H1 (cell line): ENCODE measurements at regions of chr7 and their contacts with region 1.

Region 1: DNA sequence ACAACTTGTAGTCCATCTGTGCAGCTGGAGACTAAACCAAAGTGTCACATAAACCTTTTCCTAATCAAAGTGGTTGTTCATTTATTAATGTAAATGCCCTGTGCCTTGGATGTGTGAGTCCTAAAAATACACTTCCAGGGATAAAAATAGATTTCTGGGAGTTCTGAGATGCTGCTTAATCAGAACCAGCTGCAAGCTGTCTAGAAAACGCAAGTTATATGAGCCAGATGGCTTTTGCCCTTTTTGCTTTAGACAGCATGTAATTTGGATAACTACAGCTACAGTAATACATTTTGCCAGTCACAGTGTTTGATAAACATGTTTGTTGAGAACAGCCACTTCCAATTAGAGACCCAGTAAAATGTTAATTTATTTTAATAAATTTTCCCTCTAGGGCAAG is 185.1 kb upstream of the PRPS1L1 start:
- DNase-seq: no peak
- H3K4me3 ChIP-seq: no peak overlapping the region
- H3K27ac ChIP-seq: no peak overlapping the region
- H3K4me1 ChIP-seq: no peaks in the 10 kb centered on the region
- H3K27me3 ChIP-seq: no peaks in the 10 kb centered on the region
- CTCF ChIP-seq: no peak
- EP300 ChIP-seq: no peak
- POLR2A ChIP-seq: no peak
- RAD21 ChIP-seq: no peak

Region 2: DNA sequence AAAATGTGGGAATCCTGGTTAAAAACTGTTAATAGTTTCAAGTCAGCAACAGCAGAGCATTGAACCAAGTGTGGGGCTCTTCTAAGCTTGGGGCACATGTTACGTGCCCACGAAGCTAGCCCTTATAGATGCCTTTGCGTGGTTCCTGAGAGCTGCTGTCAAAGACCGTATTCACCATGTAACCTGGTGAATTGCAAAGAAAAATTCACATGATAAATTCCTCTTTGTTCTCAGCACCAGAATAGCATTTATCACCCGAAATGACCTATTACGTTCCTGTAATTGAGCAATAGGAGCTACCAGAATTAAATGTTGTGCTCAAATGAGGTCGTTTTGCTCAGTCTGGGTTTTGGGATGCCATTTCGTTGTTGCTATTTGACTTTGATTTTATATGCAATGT is 17.5 kb after region 1 on chr7:
- CTCF ChIA-PET with region 1: interaction called, 11 read pairs
- POLR2A ChIA-PET with region 1: no interaction called
- DNase-seq: no peak
- H3K4me3 ChIP-seq: no peak overlapping the region
- H3K27ac ChIP-seq: no peak overlapping the region
- H3K4me1 ChIP-seq: no peaks in the 10 kb centered on the region
- H3K27me3 ChIP-seq: no peaks in the 10 kb centered on the region
- CTCF ChIP-seq: no peak
- EP300 ChIP-seq: no peak
- POLR2A ChIP-seq: no peak
- RAD21 ChIP-seq: no peak

Region 3: DNA sequence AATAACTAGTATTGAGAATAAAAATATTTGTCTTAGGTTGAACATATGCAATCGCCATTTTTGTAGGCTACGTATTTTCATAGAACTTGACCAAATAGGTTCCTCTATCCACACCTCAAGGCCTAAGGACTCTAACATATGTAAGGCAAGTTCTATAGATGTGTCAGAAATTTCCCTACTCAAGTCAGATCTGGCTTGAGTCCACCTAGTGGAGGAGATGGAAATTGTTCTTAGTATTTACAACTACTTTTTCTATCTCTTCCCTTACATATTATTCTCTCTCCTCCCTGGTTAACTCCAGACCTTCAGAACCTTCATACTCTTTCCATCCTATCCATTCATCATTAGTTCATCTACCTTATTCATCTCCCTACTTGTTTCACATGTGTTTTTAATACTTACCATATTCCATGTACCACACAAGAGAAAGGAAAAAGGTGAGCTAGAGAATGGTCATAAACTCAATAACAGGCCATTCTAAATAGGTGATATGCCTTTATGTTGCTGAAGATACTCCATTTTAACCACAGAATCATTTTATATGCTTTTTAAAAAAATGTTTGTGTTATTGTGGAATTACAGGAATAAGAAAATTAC is 108.3 kb after region 1 on chr7:
- CTCF ChIA-PET with region 1: interaction called, 40 read pairs
- POLR2A ChIA-PET with region 1: no interaction called
- DNase-seq: no peak
- H3K4me3 ChIP-seq: no peak overlapping the region
- H3K27ac ChIP-seq: no peak overlapping the region
- H3K4me1 ChIP-seq: peaks cover 2 to 8% (median 4%) of the 10 kb centered on the region in 4 experiments; a peak in 4 of 7 replicates
- H3K27me3 ChIP-seq: no peaks in the 10 kb centered on the region
- CTCF ChIP-seq: peak in 1 of 3 experiments; percentile 48; a peak in 2 of 4 replicates
- EP300 ChIP-seq: no peak
- POLR2A ChIP-seq: no peak
- RAD21 ChIP-seq: peak; percentile 56 to 61

Region 4: GRCh38 chr7:18337048-18337809 is 124.5 kb after region 1 on chr7:
- CTCF ChIA-PET with region 1: interaction called, 12 read pairs
- POLR2A ChIA-PET with region 1: no interaction called
- DNase-seq: no peak
- H3K4me3 ChIP-seq: no peak overlapping the region
- H3K27ac ChIP-seq: no peak overlapping the region
- H3K4me1 ChIP-seq: no peaks in the 10 kb centered on the region
- H3K27me3 ChIP-seq: no peaks in the 10 kb centered on the region
- CTCF ChIP-seq: no peak
- EP300 ChIP-seq: no peak
- POLR2A ChIP-seq: no peak
- RAD21 ChIP-seq: no peak

Region 5: DNA sequence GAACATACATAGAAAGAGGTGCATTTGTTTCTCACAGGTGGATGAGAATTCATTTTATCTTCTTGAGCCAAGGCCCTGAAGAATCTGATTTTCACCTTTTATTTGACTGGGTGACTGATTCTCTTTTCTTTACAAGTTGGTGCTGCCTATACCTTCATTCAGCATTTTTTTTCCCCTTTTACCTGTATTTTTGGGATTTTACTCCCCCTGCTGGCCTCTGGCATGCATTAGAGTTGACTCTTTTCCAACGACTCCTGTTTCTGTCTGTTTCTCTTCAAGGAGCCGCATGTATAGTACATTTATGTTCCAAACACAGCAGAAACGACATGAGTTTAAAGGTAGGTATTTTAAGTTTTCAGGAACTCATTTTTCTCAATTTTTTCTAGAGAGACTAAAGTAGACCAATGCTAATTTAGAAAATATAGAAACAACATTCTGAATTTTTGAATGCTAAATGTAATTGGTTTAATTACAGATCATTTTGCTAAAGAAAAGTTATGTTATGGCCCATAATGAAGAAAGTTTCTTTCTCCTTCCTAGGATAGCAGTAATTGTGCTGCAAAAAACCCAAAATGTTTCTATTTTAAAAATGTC is 133.0 kb after region 1 on chr7:
- CTCF ChIA-PET with region 1: interaction called, 10 read pairs
- POLR2A ChIA-PET with region 1: no interaction called
- DNase-seq: peak in 1 of 2 experiments; percentile 57
- H3K4me3 ChIP-seq: no peak overlapping the region
- H3K27ac ChIP-seq: no peak overlapping the region
- H3K4me1 ChIP-seq: no peaks in the 10 kb centered on the region
- H3K27me3 ChIP-seq: no peaks in the 10 kb centered on the region
- CTCF ChIP-seq: peak in 2 of 3 experiments; percentile 74 to 80; a peak in 3 of 4 replicates
- EP300 ChIP-seq: no peak
- POLR2A ChIP-seq: no peak
- RAD21 ChIP-seq: peak; percentile 87 to 88